ENCODE measurements at regions of chr10 and their contacts with region 1.

Region 1: GRCh38 chr10:103192451-103193106 is 493 bp downstream of the NT5C2 start:
- DNase-seq: peak; percentile 77 to 91 (median 87)
- H3K4me3 ChIP-seq: peak overlapping the region; percentile 29 to 98 (median 77)
- H3K27ac ChIP-seq: peak overlapping the region; percentile 75 to 99 (median 96)
- H3K4me1 ChIP-seq: peaks cover 33 to 66% of the 10 kb centered on the region in 2 donors
- H3K27me3 ChIP-seq: no peaks in the 10 kb centered on the region
- CTCF ChIP-seq: peak in 1 of 6 experiments; percentile 1
- POLR2A ChIP-seq: peak; percentile 49 to 64

Region 2: GRCh38 chr10:103111031-103111917 is 81.3 kb before region 1 on chr10:
- intact Hi-C with region 1: loop called in 1 of 2 experiments (anchors 10 kb)
- DNase-seq: no peak
- H3K4me3 ChIP-seq: peak overlapping the region in 1 of 4 donors; percentile 2
- H3K27ac ChIP-seq: peak overlapping the region in 2 of 5 donors; percentile 41 to 52
- H3K4me1 ChIP-seq: peaks cover 26 to 36% of the 10 kb centered on the region in 2 donors
- H3K27me3 ChIP-seq: no peaks in the 10 kb centered on the region
- CTCF ChIP-seq: peak in 1 of 6 experiments; percentile 24
- POLR2A ChIP-seq: no peak